ENCODE measurements at regions of chr1 and their contacts with region 1.

Region 1: DNA sequence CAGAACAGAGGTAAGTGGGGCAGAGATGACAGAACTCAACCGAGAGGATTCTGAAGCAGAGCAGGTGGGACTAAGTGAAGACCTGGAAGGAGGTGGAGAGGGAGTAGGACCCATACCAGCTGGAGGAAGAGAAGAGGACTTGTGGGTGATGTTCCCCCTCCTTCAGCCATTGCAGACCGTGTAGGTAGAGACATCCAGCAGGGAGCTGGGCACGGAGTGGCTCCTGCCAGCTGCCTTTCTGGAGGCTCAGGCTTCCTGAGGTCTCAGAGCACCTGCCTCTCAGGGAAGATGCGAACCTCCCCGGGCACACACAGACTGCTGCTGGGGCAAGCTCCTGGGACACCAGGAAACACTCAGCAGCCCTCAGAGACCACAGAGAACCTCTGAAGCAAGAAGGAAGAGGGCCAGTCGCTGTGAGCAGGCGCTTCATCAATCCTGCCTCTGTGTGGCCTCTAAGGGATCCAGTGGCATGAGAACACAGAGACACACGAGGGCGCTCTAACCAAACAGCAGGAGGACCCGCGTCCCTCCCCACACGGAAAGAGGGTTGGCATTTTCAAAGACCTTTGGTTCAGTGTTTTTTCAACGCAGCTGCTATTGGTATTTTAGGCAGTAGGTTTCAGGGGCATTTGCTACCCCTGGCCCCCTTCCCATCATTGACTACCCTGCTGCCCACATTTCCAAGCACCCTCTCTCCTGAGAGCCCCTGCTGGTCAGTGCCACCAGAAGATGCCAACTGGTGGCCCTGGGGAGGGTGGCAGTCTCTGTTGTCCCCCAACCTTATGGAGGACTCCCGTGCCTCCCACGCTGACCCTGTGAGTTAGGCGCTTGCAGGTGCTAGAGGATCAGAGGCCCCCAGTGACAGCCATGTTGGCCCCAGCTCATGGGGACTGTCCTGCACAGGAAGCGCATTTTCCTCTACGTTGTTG is 89.6 kb upstream of the EDN2 start:
- DNase-seq: peak; percentile 88
- H3K4me3 Mint-ChIP-seq: no peak overlapping the region
- H3K27ac Mint-ChIP-seq: no peak overlapping the region
- H3K4me1 Mint-ChIP-seq: peaks cover 22% of the 10 kb centered on the region
- H3K27me3 Mint-ChIP-seq: no peaks in the 10 kb centered on the region

Region 2: GRCh38 chr1:41639332-41639936 is 65.4 kb after region 1 on chr1:
- CTCF ChIA-PET with region 1: no interaction called
- POLR2A ChIA-PET with region 1: no interaction called
- intact Hi-C with region 1: loop called (anchors 5 kb)
- DNase-seq: peak; percentile 87
- H3K4me3 Mint-ChIP-seq: peak overlapping the region; percentile 59
- H3K27ac Mint-ChIP-seq: no peak overlapping the region
- H3K4me1 Mint-ChIP-seq: peaks cover 12% of the 10 kb centered on the region
- H3K27me3 Mint-ChIP-seq: no peaks in the 10 kb centered on the region

Region 3: DNA sequence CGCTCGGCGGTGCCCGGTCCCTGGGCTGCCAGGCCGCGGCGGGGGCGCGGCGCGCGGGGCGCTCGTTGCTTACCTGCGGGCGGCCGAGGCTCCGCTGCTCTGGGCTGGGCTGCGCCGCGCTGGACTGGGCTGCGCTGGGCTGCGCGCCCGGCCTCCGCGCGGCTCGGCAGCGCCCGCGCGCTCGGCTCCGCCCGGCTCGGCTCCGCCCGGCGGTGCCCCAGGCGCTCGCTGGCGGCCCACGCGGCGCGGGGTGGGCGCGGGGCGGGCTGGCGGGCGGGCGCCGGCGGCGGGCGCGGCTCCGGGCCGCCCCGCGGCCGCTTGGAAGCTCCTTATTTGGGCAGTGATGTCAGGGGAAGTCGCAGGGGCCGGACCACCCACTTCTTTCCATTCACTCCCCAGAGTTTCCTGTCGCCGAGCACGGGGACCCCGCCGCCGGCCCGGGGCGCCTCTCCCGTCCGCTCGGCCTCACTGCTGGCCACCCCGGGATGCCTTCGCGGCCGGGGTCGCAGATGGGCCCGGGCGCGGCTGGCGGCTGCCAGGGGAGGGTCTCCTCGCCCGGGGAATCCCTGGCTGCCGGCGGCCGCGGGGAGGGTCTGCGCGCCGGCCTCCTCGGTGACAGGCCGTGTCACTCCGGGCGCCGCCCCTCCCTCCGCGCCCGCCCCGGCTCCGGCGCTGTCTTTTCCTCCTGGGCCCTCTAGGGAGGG is 88.2 kb after region 1 on chr1:
- CTCF ChIA-PET with region 1: interaction called, 10 read pairs
- POLR2A ChIA-PET with region 1: no interaction called
- intact Hi-C with region 1: loop called (anchors 5 kb)
- DNase-seq: peak; percentile 88
- H3K4me3 Mint-ChIP-seq: peak overlapping the region; percentile 71
- H3K27ac Mint-ChIP-seq: peak overlapping the region; percentile 80
- H3K4me1 Mint-ChIP-seq: peaks cover 78% of the 10 kb centered on the region
- H3K27me3 Mint-ChIP-seq: no peaks in the 10 kb centered on the region

Region 4: GRCh38 chr1:41791667-41792484 is 217.8 kb after region 1 on chr1:
- CTCF ChIA-PET with region 1: interaction called, 4 read pairs
- POLR2A ChIA-PET with region 1: no interaction called
- intact Hi-C with region 1: loop called (anchors 5 kb)
- DNase-seq: peak; percentile 73
- H3K4me3 Mint-ChIP-seq: no peak overlapping the region
- H3K27ac Mint-ChIP-seq: peak overlapping the region; percentile 78
- H3K4me1 Mint-ChIP-seq: peaks cover 51% of the 10 kb centered on the region
- H3K27me3 Mint-ChIP-seq: no peaks in the 10 kb centered on the region

Region 5: GRCh38 chr1:41862384-41863174 is 288.5 kb after region 1 on chr1:
- CTCF ChIA-PET with region 1: interaction called, 8 read pairs
- POLR2A ChIA-PET with region 1: no interaction called
- intact Hi-C with region 1: loop called (anchors 5 kb)
- DNase-seq: peak; percentile 83
- H3K4me3 Mint-ChIP-seq: peak overlapping the region; percentile 18
- H3K27ac Mint-ChIP-seq: peak overlapping the region; percentile 83
- H3K4me1 Mint-ChIP-seq: peaks cover 36% of the 10 kb centered on the region
- H3K27me3 Mint-ChIP-seq: no peaks in the 10 kb centered on the region

Region 6: DNA sequence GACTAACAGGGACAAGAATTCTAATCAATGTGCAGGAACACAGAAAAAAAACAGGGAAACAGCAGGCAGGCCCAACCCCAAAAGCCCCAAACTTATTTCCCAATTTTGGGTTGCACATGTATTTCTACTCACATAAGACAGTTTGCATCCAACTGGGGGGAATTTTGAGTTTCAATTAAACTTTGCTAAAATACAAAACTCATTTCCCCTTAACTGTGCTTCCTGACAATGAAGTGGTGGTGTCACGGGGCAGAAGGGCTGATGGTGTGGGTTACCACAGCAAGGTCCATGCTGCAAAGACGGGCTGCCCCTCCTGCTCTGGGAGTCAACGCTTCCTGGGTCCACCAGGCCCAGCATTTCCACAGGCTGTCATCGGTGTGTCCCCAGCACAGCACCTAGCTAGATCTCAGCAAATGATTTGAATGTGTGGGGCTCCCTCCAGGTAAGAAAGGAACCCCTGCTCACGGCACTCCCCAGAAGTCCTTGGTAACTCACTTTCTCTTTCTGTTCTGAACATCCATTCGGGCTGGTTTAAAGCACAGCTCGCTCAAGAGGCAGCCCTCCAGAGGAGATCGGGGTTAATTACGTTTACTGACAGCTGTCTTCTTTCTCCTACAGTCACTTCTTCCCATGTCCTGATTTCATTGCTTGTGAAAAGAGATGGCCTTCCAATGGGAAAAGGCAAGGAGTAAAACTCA is 317.3 kb after region 1 on chr1:
- CTCF ChIA-PET with region 1: interaction called, 20 read pairs
- POLR2A ChIA-PET with region 1: no interaction called
- intact Hi-C with region 1: no loop called
- DNase-seq: peak; percentile 70
- H3K4me3 Mint-ChIP-seq: peak overlapping the region; percentile 78
- H3K27ac Mint-ChIP-seq: peak overlapping the region; percentile 90
- H3K4me1 Mint-ChIP-seq: peaks cover 44% of the 10 kb centered on the region
- H3K27me3 Mint-ChIP-seq: no peaks in the 10 kb centered on the region

Region 7: GRCh38 chr1:42173155-42173933 is 599.3 kb after region 1 on chr1:
- CTCF ChIA-PET with region 1: interaction called, 17 read pairs
- POLR2A ChIA-PET with region 1: no interaction called
- intact Hi-C with region 1: no loop called
- DNase-seq: peak; percentile 74
- H3K4me3 Mint-ChIP-seq: no peak overlapping the region
- H3K27ac Mint-ChIP-seq: no peak overlapping the region
- H3K4me1 Mint-ChIP-seq: no peaks in the 10 kb centered on the region
- H3K27me3 Mint-ChIP-seq: no peaks in the 10 kb centered on the region